Activated naive CD4-positive, alpha-beta T cell treated with anti-CD3 and anti-CD28 coated beads for 36 hours (primary cell): ENCODE measurements at regions of chr21 and their contacts with region 1.

Region 1: GRCh38 chr21:31088315-31088714 is 50.0 kb upstream of the KRTAP19-8 start:
- DNase-seq: no peak
- H3K4me3 Mint-ChIP-seq: no peak overlapping the region
- H3K27ac Mint-ChIP-seq: no peak overlapping the region
- H3K4me1 Mint-ChIP-seq: peaks cover 10% of the 10 kb centered on the region
- H3K27me3 Mint-ChIP-seq: peaks cover 9% of the 10 kb centered on the region

Region 2: DNA sequence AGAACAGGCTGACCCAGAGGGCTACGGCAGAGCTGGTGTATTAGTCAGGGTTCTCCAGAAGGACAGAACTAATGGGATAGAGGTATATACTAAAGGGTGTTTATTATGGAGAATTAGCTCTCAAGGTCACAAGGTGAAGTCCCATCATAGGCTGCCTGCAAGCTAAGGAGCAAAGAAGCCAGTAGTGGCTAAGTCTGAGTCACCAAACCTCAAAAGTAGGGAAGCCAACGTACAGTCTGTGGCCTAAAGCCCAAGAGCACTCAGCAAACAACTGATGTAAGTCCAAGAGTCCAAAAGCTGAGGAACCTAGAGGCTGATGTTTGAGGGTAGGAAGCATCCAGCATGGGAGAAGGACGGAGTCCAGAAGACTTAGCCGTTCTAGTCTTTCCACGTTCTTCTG is 1610.4 kb before region 1 on chr21:
- CTCF ChIA-PET with region 1: no interaction called
- intact Hi-C with region 1: loop called (anchors 5 kb)
- DNase-seq: no peak
- H3K4me3 Mint-ChIP-seq: no peak overlapping the region
- H3K27ac Mint-ChIP-seq: no peak overlapping the region
- H3K4me1 Mint-ChIP-seq: peaks cover 10% of the 10 kb centered on the region
- H3K27me3 Mint-ChIP-seq: no peaks in the 10 kb centered on the region

Region 3: GRCh38 chr21:30340441-30341241 is 747.7 kb before region 1 on chr21:
- CTCF ChIA-PET with region 1: interaction called, 6 read pairs
- intact Hi-C with region 1: loop called (anchors 1 kb)
- DNase-seq: peak; percentile 48
- H3K4me3 Mint-ChIP-seq: no peak overlapping the region
- H3K27ac Mint-ChIP-seq: no peak overlapping the region
- H3K4me1 Mint-ChIP-seq: no peaks in the 10 kb centered on the region
- H3K27me3 Mint-ChIP-seq: peaks cover 9% of the 10 kb centered on the region

Region 4: GRCh38 chr21:30580132-30580531 is 508.2 kb before region 1 on chr21:
- CTCF ChIA-PET with region 1: no interaction called
- intact Hi-C with region 1: no loop called
- DNase-seq: no peak
- H3K4me3 Mint-ChIP-seq: no peak overlapping the region
- H3K27ac Mint-ChIP-seq: no peak overlapping the region
- H3K4me1 Mint-ChIP-seq: no peaks in the 10 kb centered on the region
- H3K27me3 Mint-ChIP-seq: no peaks in the 10 kb centered on the region

Region 5: GRCh38 chr21:30831194-30831765 is 257.0 kb before region 1 on chr21:
- CTCF ChIA-PET with region 1: interaction called, 14 read pairs
- intact Hi-C with region 1: loop called (anchors 1 kb)
- DNase-seq: peak; percentile 65
- H3K4me3 Mint-ChIP-seq: no peak overlapping the region
- H3K27ac Mint-ChIP-seq: no peak overlapping the region
- H3K4me1 Mint-ChIP-seq: no peaks in the 10 kb centered on the region
- H3K27me3 Mint-ChIP-seq: peaks cover 12% of the 10 kb centered on the region

Region 6: GRCh38 chr21:31604591-31605190 is 516.4 kb after region 1 on chr21:
- CTCF ChIA-PET with region 1: interaction called, 3 read pairs
- intact Hi-C with region 1: loop called (anchors 1 kb)
- DNase-seq: peak; percentile 83
- H3K4me3 Mint-ChIP-seq: no peak overlapping the region
- H3K27ac Mint-ChIP-seq: no peak overlapping the region
- H3K4me1 Mint-ChIP-seq: peaks cover 7% of the 10 kb centered on the region
- H3K27me3 Mint-ChIP-seq: no peaks in the 10 kb centered on the region